Motor neuron (in vitro differentiated cells): ENCODE measurements at regions of chr6 and their contacts with region 1.

Region 1: DNA sequence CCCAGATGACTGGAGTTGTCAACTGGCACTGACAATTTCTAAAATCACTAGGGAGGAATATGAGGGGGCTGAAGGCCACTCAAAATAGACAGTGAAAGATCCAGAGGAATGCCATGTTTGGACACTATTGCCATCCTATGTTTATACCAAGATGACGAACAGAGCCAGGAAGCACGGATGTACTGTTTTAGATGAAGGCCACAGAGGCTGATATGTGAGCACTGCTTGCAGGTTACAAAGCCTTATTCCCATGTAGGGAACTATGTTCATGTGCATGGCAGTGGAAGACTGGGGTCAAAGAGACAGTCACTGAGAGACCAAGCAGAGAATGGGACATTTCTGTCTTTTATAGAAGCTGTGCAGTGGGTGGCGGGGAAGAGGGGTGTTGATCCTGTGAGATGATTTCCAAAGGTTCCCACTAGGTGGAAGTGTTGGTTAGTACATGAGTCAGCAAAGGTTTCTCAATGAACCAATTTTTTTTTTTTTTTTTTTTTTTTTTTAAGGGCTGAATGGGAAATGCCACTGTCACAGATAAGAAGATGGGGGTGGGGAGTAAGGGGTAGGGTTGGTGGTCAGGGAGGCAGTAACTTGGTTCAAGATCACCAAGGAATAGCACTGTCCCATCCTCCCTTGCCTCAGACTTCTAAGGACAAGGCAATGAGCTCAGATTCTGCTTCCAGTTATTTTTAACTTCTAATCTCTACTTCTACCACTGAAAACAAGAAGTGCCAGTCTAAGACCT is 46.7 kb upstream of the MOCS1 start:
- ATAC-seq: peak; percentile 72 to 87 (median 76)
- H3K4me3 ChIP-seq: no peak overlapping the region
- H3K27ac ChIP-seq: no peak overlapping the region
- H3K4me1 ChIP-seq: no peaks in the 10 kb centered on the region

Region 2: DNA sequence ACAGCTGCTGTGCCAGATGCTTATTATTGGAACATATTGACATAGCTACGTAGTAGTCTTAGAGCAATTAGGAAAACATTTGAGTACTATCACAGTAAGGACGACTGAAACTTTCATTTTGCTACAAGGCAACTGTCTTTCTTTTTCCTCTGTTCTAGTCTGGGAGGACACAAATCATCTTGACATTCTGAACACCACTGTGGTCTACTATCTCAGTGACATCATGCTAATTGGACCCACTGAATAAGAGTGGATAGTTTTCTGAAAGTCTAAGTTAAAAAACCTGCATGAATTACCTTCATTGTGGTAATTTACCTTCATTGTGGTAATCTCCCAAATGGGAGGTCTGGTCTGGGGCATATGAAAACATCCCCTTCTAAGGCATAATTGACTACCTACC is 116.6 kb after region 1 on chr6:
- in situ Hi-C with region 1: no loop called
- ATAC-seq: no peak
- H3K4me3 ChIP-seq: no peak overlapping the region
- H3K27ac ChIP-seq: no peak overlapping the region
- H3K4me1 ChIP-seq: no peaks in the 10 kb centered on the region

Region 3: GRCh38 chr6:40308533-40309306 is 327.7 kb after region 1 on chr6:
- in situ Hi-C with region 1: loop called in 3 of 9 experiments (anchors 10 to 25 kb)
- ATAC-seq: peak; percentile 60 to 98 (median 74)
- H3K4me3 ChIP-seq: no peak overlapping the region
- H3K27ac ChIP-seq: no peak overlapping the region
- H3K4me1 ChIP-seq: peaks cover 0 to 5% of the 10 kb centered on the region in 2 donors

Region 4: GRCh38 chr6:40587240-40588069 is 606.4 kb after region 1 on chr6 and contains the start of gene LRFN2:
- in situ Hi-C with region 1: loop called in 1 of 9 experiments (anchors 25 kb)
- ATAC-seq: peak; percentile 86 to 97 (median 92)
- H3K4me3 ChIP-seq: peak within 1 kb of the TSS; percentile 42 to 64 (median 51)
- H3K27ac ChIP-seq: peak within 1 kb of the TSS; percentile 80 to 85
- H3K4me1 ChIP-seq: peaks cover 12 to 20% of the 10 kb centered on the region in 2 donors
- total RNA-seq, gene LRFN2: 0.10 to 5.1 (median 4.2) TPM in 7 of 8 experiments, not detected in the other

Region 5: DNA sequence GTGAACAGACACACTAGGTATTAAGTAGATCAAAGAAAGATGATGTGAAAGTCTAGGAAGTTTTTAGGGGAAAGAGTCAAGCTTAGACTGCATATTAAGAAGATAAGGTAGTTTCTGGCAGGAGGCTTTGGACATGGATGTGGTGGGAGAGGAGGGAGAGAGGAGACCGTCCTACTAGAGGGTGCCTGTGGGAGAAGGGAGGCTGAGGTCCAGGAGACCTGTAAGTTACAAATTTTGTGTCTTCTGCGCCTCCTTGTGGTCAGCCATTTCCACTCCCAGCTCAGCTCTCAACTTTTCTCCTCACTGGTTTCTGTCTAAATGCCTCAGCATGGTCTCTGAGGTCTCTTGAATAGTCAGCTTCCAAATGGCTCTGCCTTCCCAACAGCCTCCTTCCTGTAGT is 864.5 kb after region 1 on chr6:
- in situ Hi-C with region 1: loop called in 2 of 9 experiments (anchors 25 kb)
- ATAC-seq: peak in 4 of 8 experiments; percentile 36 to 83 (median 52)
- H3K4me3 ChIP-seq: no peak overlapping the region
- H3K27ac ChIP-seq: no peak overlapping the region
- H3K4me1 ChIP-seq: no peaks in the 10 kb centered on the region

Region 6: DNA sequence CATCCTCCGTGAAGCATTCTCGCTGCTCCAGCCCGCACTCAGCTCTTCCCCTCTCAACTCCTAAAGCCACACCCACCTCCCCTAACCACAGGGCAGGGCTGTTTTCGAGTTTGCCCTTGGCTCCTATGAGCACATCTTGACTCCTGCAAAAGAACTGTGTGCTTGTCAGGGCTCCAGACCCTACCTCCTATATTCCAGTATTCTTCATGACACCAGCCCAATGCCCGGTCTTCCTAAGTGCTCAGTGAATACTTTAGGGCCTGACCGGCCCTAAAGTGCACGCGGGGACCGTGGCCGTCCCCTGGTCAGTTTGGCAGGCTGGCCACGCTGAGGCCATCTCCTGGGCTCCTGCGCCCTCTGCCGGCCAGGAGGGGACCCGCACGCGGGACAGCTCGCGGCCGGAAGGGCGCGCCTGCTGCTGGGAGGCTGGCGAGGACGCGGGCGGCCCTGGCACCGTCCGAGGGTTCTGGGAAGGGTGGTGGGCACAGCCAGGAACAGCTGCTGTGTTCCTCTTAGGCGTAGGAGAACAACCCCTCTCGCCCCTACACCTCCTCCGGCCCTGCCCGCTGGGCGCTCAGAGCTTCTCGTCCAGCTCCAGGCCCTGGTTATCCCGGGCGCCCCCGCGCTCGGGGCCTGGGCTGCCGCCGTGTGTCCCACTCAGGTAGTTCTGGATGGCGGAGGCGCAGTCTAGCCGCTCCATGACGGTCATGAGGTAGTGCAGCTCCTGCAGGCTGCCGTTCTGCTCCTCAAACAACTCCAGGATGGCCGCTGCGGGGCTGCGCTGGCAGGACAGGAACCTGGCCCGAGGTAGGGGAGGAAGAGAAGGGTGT is 1047.0 kb after region 1 on chr6:
- in situ Hi-C with region 1: loop called in 3 of 9 experiments (anchors 10 to 25 kb)
- ATAC-seq: peak; percentile 92 to 97 (median 94)
- H3K4me3 ChIP-seq: peak overlapping the region; percentile 7 to 28 (median 21)
- H3K27ac ChIP-seq: no peak overlapping the region
- H3K4me1 ChIP-seq: peaks cover 0 to 2% of the 10 kb centered on the region in 2 donors